ENCODE measurements at regions of chr17 and their contacts with region 1.

Region 1: GRCh38 chr17:8300627-8301242 is 5.5 kb upstream of the SLC25A35 start:
- DNase-seq: peak; percentile 83
- H3K4me3 ChIP-seq: peak overlapping the region in 1 of 2 experiments; percentile 0; a peak in 1 of 4 replicates
- H3K27ac ChIP-seq: no peak overlapping the region
- H3K4me1 ChIP-seq: no peaks in the 10 kb centered on the region
- H3K27me3 ChIP-seq: no peaks in the 10 kb centered on the region
- CTCF ChIP-seq: peak; percentile 86
- EP300 ChIP-seq: no peak
- RAD21 ChIP-seq: peak; percentile 91

Region 2: GRCh38 chr17:8162233-8162996 is 138.3 kb before region 1 on chr17 and contains the start of gene VAMP2:
- CTCF ChIA-PET with region 1: no interaction called
- POLR2A ChIA-PET with region 1: no interaction called
- DNase-seq: peak; percentile 54
- H3K4me3 ChIP-seq: peak within 1 kb of the TSS; percentile 88 to 92
- H3K27ac ChIP-seq: peak within 1 kb of the TSS; percentile 73 to 79
- H3K4me1 ChIP-seq: peaks cover 25 to 29% of the 10 kb centered on the region in 2 experiments; a peak in 3 of 4 replicates
- H3K27me3 ChIP-seq: no peaks in the 10 kb centered on the region
- CTCF ChIP-seq: no peak
- EP300 ChIP-seq: no peak
- RAD21 ChIP-seq: no peak
- polyA plus RNA-seq, gene VAMP2: 42.0 and 43.4 TPM in 2 replicates

Region 3: GRCh38 chr17:8222630-8223356 is 77.9 kb before region 1 on chr17:
- CTCF ChIA-PET with region 1: interaction called, 14 read pairs
- POLR2A ChIA-PET with region 1: interaction called, 3 read pairs
- DNase-seq: peak; percentile 76
- H3K4me3 ChIP-seq: peak overlapping the region; percentile 83 to 86
- H3K27ac ChIP-seq: peak overlapping the region; percentile 92 to 95
- H3K4me1 ChIP-seq: peaks cover 8 to 22% of the 10 kb centered on the region in 2 experiments; a peak in 3 of 4 replicates
- H3K27me3 ChIP-seq: no peaks in the 10 kb centered on the region
- CTCF ChIP-seq: no peak
- EP300 ChIP-seq: no peak
- RAD21 ChIP-seq: no peak

Region 4: DNA sequence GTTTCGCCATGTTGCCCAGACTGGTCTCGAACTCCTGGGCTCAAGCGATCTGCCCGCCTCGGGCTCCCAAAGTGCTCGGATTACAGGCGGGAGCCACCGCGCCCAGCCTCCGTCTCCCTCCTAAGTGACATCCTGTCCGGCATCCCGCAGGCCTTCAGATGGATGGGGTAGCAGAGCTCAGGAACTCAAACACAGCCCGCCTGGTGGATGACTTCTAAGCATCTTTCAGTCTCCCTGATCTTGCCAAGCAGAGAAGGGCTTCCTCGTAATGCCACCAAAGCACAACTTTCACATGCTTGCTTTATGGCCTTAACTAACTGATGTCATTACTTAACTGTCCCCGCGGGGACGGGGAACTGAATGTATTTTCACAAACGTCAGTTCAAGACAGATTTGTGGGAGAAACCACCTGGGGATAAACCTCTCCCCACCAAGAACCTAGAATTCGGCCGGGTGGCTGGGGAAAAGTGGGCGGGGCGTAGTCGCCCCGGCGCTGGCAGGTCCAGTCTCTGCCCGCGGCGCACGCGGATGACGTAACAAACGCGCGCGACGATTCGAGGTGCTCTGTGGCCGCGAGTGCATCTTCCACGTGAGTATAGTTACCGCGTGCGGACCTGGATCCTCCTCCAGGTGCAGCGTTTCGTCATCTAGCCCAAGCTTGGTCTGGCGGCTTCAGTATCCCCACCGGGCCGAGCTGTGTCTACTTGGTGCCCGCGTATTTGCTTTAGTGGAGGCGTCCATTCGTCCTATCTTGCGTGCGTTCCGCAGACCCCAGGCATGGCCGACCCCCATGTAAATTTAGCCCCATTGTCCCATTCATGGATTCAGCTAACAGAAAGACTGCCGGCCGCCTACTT is 51.8 kb before region 1 on chr17 and contains the start of gene PFAS:
- CTCF ChIA-PET with region 1: interaction called, 18 read pairs
- POLR2A ChIA-PET with region 1: interaction called, 11 read pairs
- DNase-seq: peak; percentile 93
- H3K4me3 ChIP-seq: peak within 1 kb of the TSS; percentile 75 to 93
- H3K27ac ChIP-seq: peak within 1 kb of the TSS; percentile 81 to 92
- H3K4me1 ChIP-seq: peaks cover 3 to 5% of the 10 kb centered on the region in 2 experiments; a peak in 3 of 4 replicates
- H3K27me3 ChIP-seq: no peaks in the 10 kb centered on the region
- CTCF ChIP-seq: no peak
- EP300 ChIP-seq: no peak; a peak in 1 of 4 replicates
- RAD21 ChIP-seq: no peak
- polyA plus RNA-seq, gene PFAS: 22.4 and 24.0 TPM in 2 replicates

Region 5: DNA sequence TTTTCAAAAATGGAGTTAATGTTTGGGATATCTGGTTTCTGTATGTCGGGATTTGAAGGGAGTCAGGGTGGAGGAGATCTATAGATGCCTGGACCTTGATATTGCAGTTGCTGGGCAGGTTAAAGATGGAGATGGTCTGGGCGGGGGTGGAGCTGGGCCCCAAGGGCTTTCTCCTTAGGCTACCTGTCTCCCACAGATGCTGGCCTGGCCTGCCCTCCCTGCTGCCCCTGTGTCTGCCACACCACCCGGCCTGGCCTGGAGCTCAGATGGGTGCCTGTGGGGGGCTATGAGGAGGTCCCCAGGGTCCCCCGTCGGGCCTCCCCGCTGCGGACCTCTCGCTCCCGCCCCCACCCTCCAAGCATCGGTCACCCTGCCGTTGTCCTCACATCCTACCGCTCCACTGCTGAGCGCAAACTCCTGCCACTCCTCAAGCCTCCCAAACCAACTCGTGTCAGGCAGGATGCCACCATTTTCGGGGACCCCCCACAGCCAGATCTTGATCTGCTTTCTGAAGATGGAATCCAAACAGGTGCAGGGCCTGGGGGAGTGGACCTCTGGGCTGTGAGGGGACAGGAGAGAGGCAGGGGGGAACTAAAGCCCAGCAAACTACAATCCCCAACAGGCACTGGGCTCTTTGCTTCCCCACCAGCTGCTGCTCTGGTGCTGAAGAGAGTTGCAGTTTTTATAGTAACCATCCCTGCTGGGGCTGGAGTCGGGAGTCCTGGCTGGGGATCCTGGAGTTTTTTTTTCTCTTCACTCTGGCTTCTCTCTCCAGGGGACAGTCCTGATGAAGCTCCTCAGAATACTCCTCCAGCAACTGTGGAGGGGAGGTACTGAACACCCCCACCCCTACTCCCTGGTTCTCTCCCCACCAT is 12.2 kb after region 1 on chr17:
- CTCF ChIA-PET with region 1: interaction called, 17 read pairs
- POLR2A ChIA-PET with region 1: interaction called, 5 read pairs
- DNase-seq: no peak
- H3K4me3 ChIP-seq: no peak overlapping the region
- H3K27ac ChIP-seq: no peak overlapping the region
- H3K4me1 ChIP-seq: peaks cover 0 to 4% of the 10 kb centered on the region in 2 experiments; a peak in 1 of 4 replicates
- H3K27me3 ChIP-seq: peaks cover 30% of the 10 kb centered on the region
- CTCF ChIP-seq: no peak
- EP300 ChIP-seq: no peak
- RAD21 ChIP-seq: no peak

Region 6: GRCh38 chr17:8383143-8383822 is 82.5 kb after region 1 on chr17 and contains the start of gene RPL26:
- CTCF ChIA-PET with region 1: no interaction called
- POLR2A ChIA-PET with region 1: no interaction called
- DNase-seq: peak; percentile 94
- H3K4me3 ChIP-seq: peak within 1 kb of the TSS; percentile 73 to 87
- H3K27ac ChIP-seq: peak within 1 kb of the TSS; percentile 77 to 90
- H3K4me1 ChIP-seq: peaks cover 21 to 28% of the 10 kb centered on the region in 2 experiments; a peak in 3 of 4 replicates
- H3K27me3 ChIP-seq: no peaks in the 10 kb centered on the region
- CTCF ChIP-seq: peak; percentile 98
- EP300 ChIP-seq: peak in 1 of 2 experiments; percentile 8; a peak in 1 of 4 replicates
- RAD21 ChIP-seq: peak; percentile 40; the same call in 1 of the 2 replicates
- polyA plus RNA-seq, gene RPL26: 4,770 and 5,684 TPM in 2 replicates

Measured in SK-N-SH (cell line).